Aorta (tissue), 5 donors: ENCODE measurements at regions of chr1 and their contacts with region 1.

Region 1: DNA sequence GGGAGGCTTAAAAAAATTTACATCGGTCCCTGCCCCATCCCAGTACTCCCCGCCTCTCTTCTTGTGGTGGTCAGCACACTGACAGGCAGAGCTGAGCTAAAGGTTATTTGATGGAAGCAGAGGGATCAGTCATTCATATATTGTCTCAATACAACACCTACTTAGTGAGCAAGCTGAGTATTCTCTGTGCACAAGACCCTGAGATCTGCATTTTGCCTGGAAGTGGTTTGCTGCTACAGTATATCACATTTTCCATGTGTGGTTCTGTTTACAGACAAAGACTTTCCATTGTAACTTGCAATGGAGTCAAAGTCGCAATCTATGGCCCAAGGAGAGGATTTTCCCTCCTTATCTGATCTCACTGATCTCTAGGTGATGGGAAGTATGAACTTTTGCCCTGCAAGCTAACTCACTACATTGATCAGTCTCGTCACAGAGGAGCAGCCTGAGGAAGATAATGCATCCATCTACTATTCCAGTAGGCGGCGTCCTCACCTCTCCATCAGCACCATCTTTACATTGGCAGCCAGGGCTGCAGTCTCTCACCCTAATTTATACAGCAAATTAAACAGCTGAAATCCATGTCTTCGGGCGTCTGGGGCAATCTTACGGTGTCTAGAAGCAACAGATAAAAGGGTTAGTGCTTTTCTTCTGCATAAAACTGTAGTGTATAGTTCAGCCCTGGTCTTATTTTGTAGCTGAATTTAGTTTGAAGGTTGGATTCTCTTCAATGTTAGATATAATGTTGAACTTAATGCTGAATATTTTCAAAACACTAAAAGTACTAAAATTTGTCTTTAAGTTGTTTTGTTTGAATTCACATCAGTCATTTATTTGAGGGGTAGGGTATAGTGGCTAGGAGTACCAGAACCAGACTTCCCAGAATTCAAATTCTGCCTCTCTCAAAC is 3.2 kb upstream of the TRAF5 start:
- DNase-seq: no peak
- ATAC-seq: no peak
- H3K4me3 ChIP-seq: no peak overlapping the region
- H3K27ac ChIP-seq: no peak overlapping the region
- H3K4me1 ChIP-seq: no peaks in the 10 kb centered on the region
- H3K27me3 ChIP-seq: no peaks in the 10 kb centered on the region

Region 2: DNA sequence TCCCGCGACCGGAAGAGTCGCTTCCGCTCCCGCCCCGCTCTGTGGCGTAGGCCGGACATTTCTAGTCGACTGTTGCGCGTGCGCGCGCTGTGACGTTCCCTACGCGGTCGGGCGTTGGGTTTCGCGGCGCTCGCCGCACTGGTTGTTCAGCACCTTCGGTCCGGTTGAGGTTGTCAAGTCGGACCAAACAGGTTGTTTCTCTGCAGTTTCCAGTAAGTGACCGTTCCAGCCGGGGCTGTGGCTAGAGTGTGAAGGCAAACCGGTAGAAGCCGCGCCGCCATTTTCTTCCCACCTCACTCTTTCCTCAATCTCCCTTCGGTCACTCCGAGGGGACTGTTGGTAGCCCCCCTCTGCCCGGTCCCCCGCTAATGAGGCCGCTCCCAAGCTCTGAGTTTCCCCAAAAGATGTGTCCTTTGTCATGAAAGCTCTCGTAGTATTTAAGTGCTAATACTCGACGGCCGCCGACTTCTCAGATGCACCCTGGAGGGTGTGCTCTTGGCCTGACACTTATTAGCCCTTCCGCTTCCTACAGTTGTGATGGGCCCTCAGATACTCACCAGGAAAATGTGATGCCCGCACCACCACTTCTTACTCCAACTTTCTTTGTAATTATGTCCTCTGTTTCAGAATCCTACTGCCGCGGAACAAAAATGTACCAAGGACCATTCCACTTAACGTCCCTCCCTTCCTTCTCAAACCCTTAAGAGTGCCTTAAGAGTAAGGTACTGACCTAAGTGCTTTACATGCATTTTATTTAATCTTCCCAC is 59.5 kb after region 1 on chr1:
- intact Hi-C with region 1: loop called (anchors 2 to 5 kb)
- DNase-seq: peak; percentile 96 to 98
- ATAC-seq: peak; percentile 99
- H3K4me3 ChIP-seq: peak overlapping the region; percentile 58 to 70
- H3K27ac ChIP-seq: peak overlapping the region; percentile 68 to 99
- H3K4me1 ChIP-seq: no peaks in the 10 kb centered on the region
- H3K27me3 ChIP-seq: no peaks in the 10 kb centered on the region

Region 3: DNA sequence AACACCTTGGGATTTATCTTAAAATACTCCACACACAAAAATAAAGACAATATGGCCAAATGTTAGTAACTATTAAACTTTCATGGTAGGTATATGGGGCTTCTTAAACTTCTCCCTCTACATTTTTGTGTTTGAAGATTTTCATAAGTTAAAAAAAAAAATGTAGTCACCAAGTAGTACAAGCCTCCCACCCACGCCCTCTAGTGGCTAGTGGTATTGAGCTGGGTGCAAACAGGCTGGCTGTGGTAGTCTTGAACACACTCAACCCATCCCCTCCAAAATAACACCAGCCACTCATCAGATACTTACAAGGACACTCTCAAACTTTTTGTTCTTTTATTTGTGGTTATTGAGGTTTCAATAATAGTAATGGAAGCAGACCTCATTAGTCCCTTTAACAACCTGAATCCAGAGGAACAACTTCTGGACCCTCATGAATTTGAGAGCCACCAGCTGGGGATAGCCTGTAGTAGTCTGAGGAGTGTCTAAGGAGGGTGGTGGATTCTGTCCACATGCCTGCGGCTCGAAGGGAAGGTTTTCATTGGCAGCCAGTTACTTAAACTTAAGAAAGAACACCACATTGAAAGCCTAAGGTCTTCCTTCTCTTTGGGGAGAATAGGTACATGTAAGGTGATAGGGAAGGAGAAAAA is 152.9 kb after region 1 on chr1:
- intact Hi-C with region 1: loop called (anchors 5 kb)
- DNase-seq: peak in 1 of 2 donors; percentile 83
- ATAC-seq: no peak
- H3K4me3 ChIP-seq: no peak overlapping the region
- H3K27ac ChIP-seq: no peak overlapping the region
- H3K4me1 ChIP-seq: no peaks in the 10 kb centered on the region
- H3K27me3 ChIP-seq: no peaks in the 10 kb centered on the region

Region 4: GRCh38 chr1:211648980-211649934 is 325.8 kb after region 1 on chr1:
- intact Hi-C with region 1: loop called (anchors 5 to 10 kb)
- DNase-seq: peak in 1 of 2 donors; percentile 85
- ATAC-seq: peak; percentile 62
- H3K4me3 ChIP-seq: no peak overlapping the region
- H3K27ac ChIP-seq: no peak overlapping the region
- H3K4me1 ChIP-seq: no peaks in the 10 kb centered on the region
- H3K27me3 ChIP-seq: no peaks in the 10 kb centered on the region